HCT116 (cell line): ENCODE measurements at regions of chr7 and their contacts with region 1.

Region 1: GRCh38 chr7:148962823-148963582 is 65.3 kb downstream of the PDIA4 start:
- DNase-seq: peak; percentile 60
- ATAC-seq: peak; percentile 26; the same call in 1 of the 2 replicates
- H3K4me3 ChIP-seq: peak overlapping the region; percentile 40 to 50
- H3K27ac ChIP-seq: no peak overlapping the region
- H3K4me1 ChIP-seq: peaks cover 0 to 39% of the 10 kb centered on the region in 2 experiments; a peak in 2 of 4 replicates
- H3K27me3 ChIP-seq: no peaks in the 10 kb centered on the region
- CTCF ChIP-seq: peak; percentile 62 to 94 (median 88)
- POLR2A ChIP-seq: no peak
- RAD21 ChIP-seq: peak; percentile 99

Region 2: DNA sequence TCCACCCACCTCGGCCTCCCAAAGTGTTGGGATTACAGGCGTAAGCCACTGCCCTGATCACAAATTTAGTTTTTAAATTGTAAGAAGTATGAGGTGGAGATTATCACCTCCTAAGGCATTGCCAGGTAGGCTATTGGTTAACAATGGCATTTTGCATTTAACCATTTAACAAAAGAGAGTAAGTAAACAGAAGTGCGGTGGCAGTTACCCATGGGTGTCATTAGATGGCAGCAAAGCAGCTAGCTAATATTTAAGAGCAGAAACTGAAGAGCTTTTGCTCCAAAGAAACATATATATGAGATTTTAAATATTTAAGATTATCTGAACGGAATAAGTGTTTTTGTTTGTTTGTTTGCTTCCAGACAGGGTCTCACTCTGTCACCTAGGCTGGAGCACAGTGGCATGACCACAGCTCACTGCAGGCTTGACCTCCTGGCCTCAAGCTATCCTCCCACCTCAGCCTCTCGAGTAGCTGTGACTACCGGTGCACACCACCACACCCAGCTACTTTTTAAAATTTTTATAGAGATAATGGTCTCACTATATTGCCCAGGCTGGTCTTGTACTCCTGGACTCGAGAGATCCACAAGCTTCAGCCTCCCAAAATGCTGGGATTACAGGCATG is 698.0 kb before region 1 on chr7:
- CTCF ChIA-PET with region 1: interaction called, 14 read pairs
- POLR2A ChIA-PET with region 1: interaction called, 3 read pairs
- RAD21 ChIA-PET with region 1: no interaction called
- intact Hi-C with region 1: loop called (anchors 1 kb)
- DNase-seq: peak; percentile 24
- ATAC-seq: peak; percentile 64
- H3K4me3 ChIP-seq: no peak overlapping the region
- H3K27ac ChIP-seq: no peak overlapping the region
- H3K4me1 ChIP-seq: peaks cover 0 to 6% of the 10 kb centered on the region in 2 experiments; a peak in 1 of 4 replicates
- H3K27me3 ChIP-seq: no peaks in the 10 kb centered on the region
- CTCF ChIP-seq: peak; percentile 48 to 78 (median 70); a peak in 5 of 6 replicates
- POLR2A ChIP-seq: no peak
- RAD21 ChIP-seq: peak; percentile 79

Region 3: DNA sequence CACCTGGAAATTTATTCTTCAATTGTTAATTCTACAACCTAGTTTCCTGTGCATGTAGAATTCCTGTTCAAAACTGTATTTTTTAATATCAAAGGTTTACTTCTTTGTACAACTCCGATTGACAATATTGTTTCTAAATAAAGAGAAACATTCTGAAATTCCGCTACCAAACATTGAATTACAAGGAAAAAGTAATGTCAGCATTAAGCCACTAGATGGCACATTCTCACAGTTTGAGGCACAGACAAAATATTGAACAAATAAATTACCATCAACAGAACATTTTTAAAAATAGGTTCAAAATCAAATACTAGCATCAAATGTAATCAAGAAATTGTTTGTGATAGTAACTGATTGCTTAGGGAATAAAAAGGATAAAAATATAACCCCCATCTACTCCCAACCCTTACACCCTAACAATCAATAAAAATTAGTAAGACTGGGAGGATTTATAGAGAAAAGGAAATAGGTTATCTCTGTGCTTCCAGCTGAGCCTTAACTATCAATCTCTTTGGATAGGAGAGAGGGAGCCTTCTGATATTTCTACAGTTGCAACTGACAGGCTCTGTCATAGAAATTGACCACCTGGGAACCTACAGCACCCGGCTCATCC is 459.0 kb before region 1 on chr7:
- CTCF ChIA-PET with region 1: interaction called, 5 read pairs
- POLR2A ChIA-PET with region 1: no interaction called
- RAD21 ChIA-PET with region 1: interaction called in 1 of 2 experiments, 6 read pairs
- intact Hi-C with region 1: loop called (anchors 1 kb)
- DNase-seq: peak; percentile 24
- ATAC-seq: no peak
- H3K4me3 ChIP-seq: no peak overlapping the region
- H3K27ac ChIP-seq: no peak overlapping the region
- H3K4me1 ChIP-seq: no peaks in the 10 kb centered on the region
- H3K27me3 ChIP-seq: peaks cover 7% of the 10 kb centered on the region; the same call in 1 of the 2 replicates
- CTCF ChIP-seq: peak; percentile 50 to 85 (median 82)
- POLR2A ChIP-seq: no peak
- RAD21 ChIP-seq: peak; percentile 88

Region 4: GRCh38 chr7:148575640-148576411 is 387.2 kb before region 1 on chr7:
- CTCF ChIA-PET with region 1: interaction called, 7 read pairs
- POLR2A ChIA-PET with region 1: no interaction called
- RAD21 ChIA-PET with region 1: interaction called in 1 of 2 experiments, 3 read pairs
- intact Hi-C with region 1: loop called (anchors 1 kb)
- DNase-seq: peak; percentile 22
- ATAC-seq: peak; percentile 98
- H3K4me3 ChIP-seq: no peak overlapping the region
- H3K27ac ChIP-seq: no peak overlapping the region
- H3K4me1 ChIP-seq: 0 out of 4 replicates have a peak, but pooled peaks cover 0 to 4% of the 10 kb centered on the region in 2 experiments
- H3K27me3 ChIP-seq: no peaks in the 10 kb centered on the region
- CTCF ChIP-seq: peak; percentile 70 to 89 (median 83)
- POLR2A ChIP-seq: no peak
- RAD21 ChIP-seq: peak; percentile 91

Region 5: GRCh38 chr7:148698397-148699023 is 264.5 kb before region 1 on chr7 and contains the start of gene CUL1:
- CTCF ChIA-PET with region 1: no interaction called
- POLR2A ChIA-PET with region 1: no interaction called
- RAD21 ChIA-PET with region 1: no interaction called
- intact Hi-C with region 1: loop called (anchors 10 kb)
- DNase-seq: peak; percentile 34
- ATAC-seq: peak; percentile 86
- H3K4me3 ChIP-seq: peak within 1 kb of the TSS; percentile 66 to 67
- H3K27ac ChIP-seq: peak within 1 kb of the TSS; percentile 92
- H3K4me1 ChIP-seq: peaks cover 18 to 42% of the 10 kb centered on the region in 2 experiments
- H3K27me3 ChIP-seq: no peaks in the 10 kb centered on the region
- CTCF ChIP-seq: no peak
- POLR2A ChIP-seq: peak; percentile 47
- RAD21 ChIP-seq: no peak
- total RNA-seq, gene CUL1: 53.1 TPM

Region 6: DNA sequence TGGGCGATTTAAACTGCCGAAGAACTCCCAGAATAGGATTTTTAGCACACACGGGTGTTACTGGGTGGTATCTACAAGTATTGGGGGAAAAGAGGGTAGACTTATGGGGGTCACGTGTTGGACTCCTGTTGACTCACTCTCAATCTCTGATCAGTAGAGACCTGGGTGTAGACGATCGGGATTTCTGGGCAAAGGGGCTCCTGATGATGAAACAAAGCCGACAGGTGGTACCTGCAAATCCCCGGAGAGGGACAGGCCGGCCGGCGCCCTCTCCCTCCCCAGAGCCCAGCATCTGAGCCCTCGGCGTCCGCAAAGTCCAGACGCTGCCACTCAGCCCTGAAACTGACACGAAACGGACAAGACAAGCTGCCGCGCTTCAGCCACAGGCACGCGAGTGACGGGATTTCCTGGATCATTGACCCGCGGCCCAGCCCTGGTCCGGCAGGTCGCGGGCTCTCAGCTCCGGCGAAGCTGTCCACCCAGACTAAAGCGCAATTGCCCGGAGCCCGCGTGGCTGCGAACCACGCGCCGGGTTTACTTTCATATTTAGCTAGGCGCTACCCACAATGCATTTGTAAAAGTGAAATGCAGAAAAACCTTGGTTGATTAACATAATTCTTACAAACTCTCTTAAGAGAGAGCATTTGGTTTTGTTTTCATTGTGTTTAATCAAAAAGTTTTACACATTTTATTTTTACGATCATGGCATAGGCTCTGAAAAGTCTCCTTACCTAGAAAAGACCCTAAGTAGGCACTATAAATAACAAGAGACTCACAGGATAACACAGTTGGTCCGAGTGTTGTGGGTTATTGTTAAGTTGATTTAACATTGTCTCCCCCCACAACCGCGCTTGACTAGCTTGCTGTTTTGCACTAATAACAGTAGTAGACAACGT is 22.1 kb before region 1 on chr7:
- CTCF ChIA-PET with region 1: no interaction called
- POLR2A ChIA-PET with region 1: interaction called, 6 read pairs
- RAD21 ChIA-PET with region 1: no interaction called
- intact Hi-C with region 1: loop called (anchors 1 kb)
- DNase-seq: peak; percentile 82
- ATAC-seq: peak; percentile 77
- H3K4me3 ChIP-seq: peak overlapping the region; percentile 58 to 67
- H3K27ac ChIP-seq: peak overlapping the region; percentile 69
- H3K4me1 ChIP-seq: peaks cover 10 to 15% of the 10 kb centered on the region in 2 experiments; a peak in 3 of 4 replicates
- H3K27me3 ChIP-seq: no peaks in the 10 kb centered on the region
- CTCF ChIP-seq: no peak
- POLR2A ChIP-seq: peak; percentile 89
- RAD21 ChIP-seq: peak; percentile 2; the same call in 1 of the 2 replicates